ENCODE measurements at regions of chr13 and their contacts with region 1.

Region 1: DNA sequence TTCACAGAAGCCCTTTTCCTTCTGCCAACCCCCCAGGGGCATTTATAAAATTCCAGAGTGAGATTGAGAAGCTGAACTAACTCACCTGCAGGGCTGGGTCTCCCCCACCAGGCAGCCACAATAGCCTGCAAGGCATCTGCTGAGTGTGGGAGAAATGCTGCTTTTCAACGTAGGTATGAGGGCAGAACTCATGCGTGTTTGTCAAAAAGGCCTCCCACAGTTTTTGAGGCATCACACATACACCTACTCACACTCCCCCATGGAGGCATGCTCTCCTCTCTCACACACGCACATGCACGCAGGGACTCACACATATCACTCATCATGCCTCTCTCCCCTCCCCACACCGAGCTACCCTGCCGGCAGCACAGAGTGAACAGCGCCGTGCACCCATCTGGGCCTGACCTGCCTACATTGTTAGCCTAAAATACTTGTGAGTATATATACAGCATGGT is 390.5 kb downstream of the FGF9 start:
- DNase-seq: peak; percentile 77
- H3K4me3 Mint-ChIP-seq: peak overlapping the region; percentile 74
- H3K27ac Mint-ChIP-seq: peak overlapping the region; percentile 86
- H3K4me1 Mint-ChIP-seq: peaks cover 54% of the 10 kb centered on the region
- H3K27me3 Mint-ChIP-seq: no peaks in the 10 kb centered on the region

Region 2: GRCh38 chr13:21670883-21671619 is 390.3 kb before region 1 on chr13 and contains the start of gene FGF9:
- intact Hi-C with region 1: loop called (anchors 5 kb)
- DNase-seq: peak; percentile 95
- H3K4me3 Mint-ChIP-seq: peak within 1 kb of the TSS; percentile 86
- H3K27ac Mint-ChIP-seq: peak within 1 kb of the TSS; percentile 60
- H3K4me1 Mint-ChIP-seq: peaks cover 40% of the 10 kb centered on the region
- H3K27me3 Mint-ChIP-seq: peaks cover 67% of the 10 kb centered on the region
- total RNA-seq, gene FGF9: 0.40 and 0.54 TPM in 2 replicates

Region 3: DNA sequence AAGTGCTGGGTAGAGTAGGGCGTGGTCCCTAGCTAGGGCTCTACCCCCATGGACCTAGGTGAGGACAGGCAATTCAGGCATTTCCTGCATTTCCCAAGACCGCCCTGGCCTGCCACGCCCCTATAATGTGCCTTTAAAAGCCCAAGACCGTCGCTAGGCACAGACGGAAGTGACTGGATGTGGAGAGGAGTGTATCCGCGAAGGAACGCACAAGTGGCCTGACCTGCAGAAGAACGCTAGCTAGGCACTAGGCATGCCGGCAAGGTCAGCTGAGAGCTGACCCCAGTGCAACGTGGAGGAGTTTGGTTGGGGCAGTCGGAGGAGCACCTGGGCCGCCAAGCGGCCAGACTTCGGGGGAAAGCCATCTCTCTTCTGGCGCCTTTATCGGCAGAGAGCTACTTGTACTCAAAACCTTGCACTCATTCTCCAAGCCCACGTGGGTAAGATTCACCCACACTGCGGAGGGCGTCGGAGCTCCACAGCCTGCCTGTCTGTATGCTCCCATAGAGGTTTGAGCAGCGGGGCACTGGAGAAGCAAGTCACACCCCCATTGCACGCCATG is 20.5 kb before region 1 on chr13:
- intact Hi-C with region 1: loop called (anchors 2 kb)
- DNase-seq: peak; percentile 58
- H3K4me3 Mint-ChIP-seq: peak overlapping the region; percentile 80
- H3K27ac Mint-ChIP-seq: peak overlapping the region; percentile 76
- H3K4me1 Mint-ChIP-seq: peaks cover 15% of the 10 kb centered on the region
- H3K27me3 Mint-ChIP-seq: no peaks in the 10 kb centered on the region

Region 4: DNA sequence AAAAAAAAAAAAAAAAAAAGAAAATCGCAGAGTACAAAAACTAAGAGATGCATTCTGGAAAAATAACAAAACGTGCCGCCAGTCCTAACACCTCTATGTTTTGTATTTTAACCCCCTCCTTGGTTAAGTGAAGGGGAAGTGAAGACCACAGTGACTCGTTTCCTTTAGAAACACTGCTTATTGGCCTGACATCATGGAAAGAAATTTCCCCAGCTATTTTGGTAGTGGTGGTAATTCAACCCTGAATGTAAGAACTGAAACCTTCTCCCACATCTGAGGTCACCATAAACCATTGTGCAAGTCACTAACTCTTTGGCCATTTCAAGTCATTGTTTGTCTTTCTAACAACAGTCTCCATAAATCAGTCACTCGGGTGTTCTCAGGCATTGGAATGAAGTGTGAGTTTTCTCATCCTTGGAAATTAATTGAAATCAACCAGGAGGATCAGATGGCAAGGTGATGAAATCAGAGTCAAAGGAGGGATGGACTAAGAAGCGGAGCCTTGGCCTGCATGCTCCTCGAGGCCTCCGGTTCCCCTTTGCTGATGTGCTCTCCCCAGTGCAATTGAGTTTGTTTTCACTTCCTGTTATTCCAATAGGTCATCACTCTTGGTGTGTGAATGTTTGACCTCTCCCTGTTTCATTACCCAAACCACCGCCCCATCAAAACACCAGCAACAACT is 53.4 kb after region 1 on chr13:
- intact Hi-C with region 1: loop called (anchors 1 kb)
- DNase-seq: peak; percentile 88
- H3K4me3 Mint-ChIP-seq: peak overlapping the region; percentile 53
- H3K27ac Mint-ChIP-seq: peak overlapping the region; percentile 94
- H3K4me1 Mint-ChIP-seq: peaks cover 55% of the 10 kb centered on the region
- H3K27me3 Mint-ChIP-seq: no peaks in the 10 kb centered on the region

Region 5: GRCh38 chr13:22278336-22278929 is 217.1 kb after region 1 on chr13:
- intact Hi-C with region 1: loop called (anchors 10 kb)
- DNase-seq: peak; percentile 87
- H3K4me3 Mint-ChIP-seq: no peak overlapping the region
- H3K27ac Mint-ChIP-seq: no peak overlapping the region
- H3K4me1 Mint-ChIP-seq: no peaks in the 10 kb centered on the region
- H3K27me3 Mint-ChIP-seq: no peaks in the 10 kb centered on the region

Measured in activated CD4-positive, alpha-beta T cell treated with anti-CD3 and anti-CD28 coated beads, Interleukin-2, amount 10 ng/mL, durations not matched to agents 24 days and 14 days (primary cell).